KBM-7 (cell line): ENCODE measurements at regions of chr12 and their contacts with region 1.

Region 1: GRCh38 chr12:11581179-11581755 is 68.2 kb upstream of the ETV6 start:
- DNase-seq: peak; percentile 75

Region 2: GRCh38 chr12:11695321-11695720 is 114.1 kb after region 1 on chr12:
- in situ Hi-C with region 1: no loop called
- DNase-seq: no peak

Region 3: GRCh38 chr12:12032851-12033588 is 451.8 kb after region 1 on chr12:
- in situ Hi-C with region 1: loop called (anchors 25 kb)
- DNase-seq: peak; percentile 79